IMR-90 (cell line): ENCODE measurements at regions of chr10 and their contacts with region 1.

Region 1: GRCh38 chr10:84139126-84140035 is at the start of gene GHITM:
- DNase-seq: peak; percentile 98
- ATAC-seq: peak; percentile 99
- H3K4me3 ChIP-seq: peak within 1 kb of the TSS; percentile 89
- H3K27ac ChIP-seq: peak within 1 kb of the TSS; percentile 73
- H3K4me1 ChIP-seq: peaks cover 4% of the 10 kb centered on the region
- H3K27me3 ChIP-seq: no peaks in the 10 kb centered on the region
- CTCF ChIP-seq: peak; percentile 43
- POLR2A ChIP-seq: peak; percentile 91
- RAD21 ChIP-seq: no peak
- total RNA-seq, gene GHITM: 185 and 186 TPM in 2 replicates

Region 2: DNA sequence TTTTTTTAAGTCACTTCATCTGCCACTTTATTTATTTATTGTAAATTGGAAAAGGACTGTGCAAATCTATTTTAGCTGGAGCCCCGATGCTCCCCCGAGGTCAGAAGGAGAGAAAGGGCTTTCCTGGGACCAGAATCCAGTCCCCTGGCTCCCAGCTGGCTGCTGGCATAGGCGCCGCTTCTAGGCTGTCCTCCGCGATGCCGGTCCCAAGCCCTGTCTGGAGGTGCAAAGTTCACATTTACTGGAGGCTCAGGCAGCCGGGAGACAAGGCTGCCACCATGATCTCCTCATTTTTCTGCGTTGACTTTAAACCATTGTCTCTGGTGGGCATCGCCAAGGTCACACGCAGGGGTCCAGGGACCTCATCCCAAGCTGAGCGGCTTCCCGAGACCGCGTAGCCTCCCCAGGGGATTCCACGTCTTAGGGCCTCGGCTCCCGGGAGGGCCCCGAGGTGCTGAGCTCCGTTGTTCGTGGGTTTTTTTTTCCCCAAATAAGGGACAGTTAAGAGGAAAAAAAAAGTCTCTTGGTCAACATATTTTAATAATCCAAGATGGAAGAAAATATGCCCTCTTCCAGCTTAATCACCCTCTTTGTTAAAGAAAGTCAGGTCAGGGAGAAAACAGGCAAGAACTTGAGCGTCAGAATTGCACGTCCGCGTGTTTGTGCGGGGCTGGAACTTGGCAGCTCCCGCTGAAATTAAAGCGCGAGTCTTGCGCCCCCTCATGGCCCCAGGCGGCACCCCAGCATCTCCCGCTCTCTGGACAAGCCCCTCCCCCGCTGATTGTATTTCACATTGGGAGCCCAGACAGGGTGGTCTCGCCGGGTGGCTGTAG is 117.3 kb after region 1 on chr10:
- CTCF ChIA-PET with region 1: no interaction called
- POLR2A ChIA-PET with region 1: no interaction called
- dilution Hi-C with region 1: no loop called
- in situ Hi-C with region 1: no loop called
- intact Hi-C with region 1: loop called (anchors 10 kb)
- DNase-seq: peak; percentile 51
- ATAC-seq: peak; percentile 88
- H3K4me3 ChIP-seq: no peak overlapping the region
- H3K27ac ChIP-seq: no peak overlapping the region
- H3K4me1 ChIP-seq: no peaks in the 10 kb centered on the region
- H3K27me3 ChIP-seq: peaks cover 29% of the 10 kb centered on the region
- CTCF ChIP-seq: peak; percentile 68
- POLR2A ChIP-seq: no peak
- RAD21 ChIP-seq: peak; percentile 49